Activated naive CD4-positive, alpha-beta T cell treated with anti-CD3 and anti-CD28 coated beads for 36 hours (primary cell): ENCODE measurements at regions of chr9 and their contacts with region 1.

Region 1: DNA sequence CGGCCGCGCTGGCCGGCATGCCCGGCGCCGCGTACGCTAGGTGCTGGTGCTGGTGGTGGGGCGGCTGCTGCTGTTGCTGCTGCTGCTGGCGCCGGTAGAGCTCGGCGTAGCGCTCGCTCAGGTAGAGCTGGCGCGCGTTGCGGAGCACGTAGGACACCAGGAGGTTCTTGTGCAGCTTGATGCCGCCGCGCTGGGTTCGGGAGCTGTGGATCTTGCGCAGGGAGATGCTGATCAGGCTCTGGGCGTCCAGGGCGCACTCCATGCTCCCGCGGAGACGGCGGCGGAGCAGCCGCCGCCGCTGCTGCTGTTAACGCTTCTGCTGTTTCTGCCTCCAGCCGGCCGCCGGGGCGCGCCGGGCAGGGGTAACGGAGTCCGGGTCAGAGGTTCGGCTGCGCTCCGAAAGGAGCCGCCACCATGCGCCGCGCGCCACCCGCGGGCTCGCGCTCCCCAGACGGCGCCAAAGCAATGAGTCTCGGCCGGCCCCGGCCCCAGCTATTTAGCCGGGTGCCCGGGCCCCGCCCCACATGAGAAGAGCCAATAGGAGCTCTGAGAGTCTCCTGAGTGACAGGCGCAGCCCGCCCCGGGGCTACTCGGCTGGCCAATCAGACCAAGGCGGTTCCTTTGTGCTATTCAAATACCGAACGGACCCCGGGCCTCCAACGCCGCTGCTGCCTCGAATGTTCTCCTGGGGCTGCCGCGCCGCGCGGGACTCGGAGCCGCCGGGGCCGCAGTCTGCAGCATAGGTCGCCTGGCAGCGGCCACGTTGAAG is at the start of gene IER5L:
- DNase-seq: peak; percentile 93
- H3K4me3 Mint-ChIP-seq: peak within 1 kb of the TSS; percentile 87
- H3K27ac Mint-ChIP-seq: no peak within 1 kb of the TSS
- H3K4me1 Mint-ChIP-seq: peaks cover 8% of the 10 kb centered on the region
- H3K27me3 Mint-ChIP-seq: no peaks in the 10 kb centered on the region
- total RNA-seq, gene IER5L: 1.1 to 1.6 TPM

Region 2: DNA sequence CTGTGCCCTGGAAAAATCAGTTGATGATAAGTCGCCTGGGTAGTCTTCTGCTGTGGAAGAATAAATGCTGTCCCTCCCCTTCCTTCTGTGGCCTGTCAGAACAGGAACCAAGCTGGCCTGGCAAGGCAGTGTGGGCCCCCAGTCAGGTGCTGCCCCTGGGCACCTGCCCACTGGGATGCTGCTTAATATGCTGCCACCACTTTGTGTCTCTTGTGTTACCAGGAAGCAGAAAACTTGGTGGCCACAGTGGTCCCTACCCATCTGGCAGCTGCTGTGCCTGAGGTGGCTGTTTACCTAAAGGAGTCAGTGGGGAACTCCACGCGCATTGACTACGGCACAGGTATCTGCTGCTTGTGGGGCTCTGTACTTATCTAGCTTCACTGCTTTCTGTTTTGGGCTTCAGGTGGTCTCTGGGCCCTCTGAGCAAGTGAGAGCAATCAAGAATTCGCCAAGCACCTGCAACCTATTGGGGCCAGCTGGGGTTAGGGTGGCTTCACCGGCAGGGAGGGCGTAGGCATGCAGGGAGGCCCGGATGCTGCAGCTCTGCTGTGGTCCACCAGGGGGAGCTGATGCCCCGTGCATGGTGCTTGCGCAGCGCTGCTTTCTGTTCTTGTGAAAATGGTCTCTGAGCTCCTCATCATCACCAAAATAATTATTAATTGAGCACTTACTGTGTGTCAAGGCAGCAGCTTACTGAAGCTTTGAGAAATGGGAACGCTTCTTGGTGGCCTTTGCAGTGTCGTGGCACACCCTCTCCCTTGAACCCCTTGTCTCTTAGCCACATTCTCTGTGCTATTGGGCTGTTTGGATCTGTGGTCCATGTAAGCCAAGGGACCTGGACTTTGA is 46.5 kb before region 1 on chr9:
- CTCF ChIA-PET with region 1: interaction called, 24 read pairs
- intact Hi-C with region 1: no loop called
- DNase-seq: peak; percentile 90
- H3K4me3 Mint-ChIP-seq: no peak overlapping the region
- H3K27ac Mint-ChIP-seq: peak overlapping the region; percentile 27
- H3K4me1 Mint-ChIP-seq: peaks cover 6% of the 10 kb centered on the region
- H3K27me3 Mint-ChIP-seq: no peaks in the 10 kb centered on the region

Region 3: DNA sequence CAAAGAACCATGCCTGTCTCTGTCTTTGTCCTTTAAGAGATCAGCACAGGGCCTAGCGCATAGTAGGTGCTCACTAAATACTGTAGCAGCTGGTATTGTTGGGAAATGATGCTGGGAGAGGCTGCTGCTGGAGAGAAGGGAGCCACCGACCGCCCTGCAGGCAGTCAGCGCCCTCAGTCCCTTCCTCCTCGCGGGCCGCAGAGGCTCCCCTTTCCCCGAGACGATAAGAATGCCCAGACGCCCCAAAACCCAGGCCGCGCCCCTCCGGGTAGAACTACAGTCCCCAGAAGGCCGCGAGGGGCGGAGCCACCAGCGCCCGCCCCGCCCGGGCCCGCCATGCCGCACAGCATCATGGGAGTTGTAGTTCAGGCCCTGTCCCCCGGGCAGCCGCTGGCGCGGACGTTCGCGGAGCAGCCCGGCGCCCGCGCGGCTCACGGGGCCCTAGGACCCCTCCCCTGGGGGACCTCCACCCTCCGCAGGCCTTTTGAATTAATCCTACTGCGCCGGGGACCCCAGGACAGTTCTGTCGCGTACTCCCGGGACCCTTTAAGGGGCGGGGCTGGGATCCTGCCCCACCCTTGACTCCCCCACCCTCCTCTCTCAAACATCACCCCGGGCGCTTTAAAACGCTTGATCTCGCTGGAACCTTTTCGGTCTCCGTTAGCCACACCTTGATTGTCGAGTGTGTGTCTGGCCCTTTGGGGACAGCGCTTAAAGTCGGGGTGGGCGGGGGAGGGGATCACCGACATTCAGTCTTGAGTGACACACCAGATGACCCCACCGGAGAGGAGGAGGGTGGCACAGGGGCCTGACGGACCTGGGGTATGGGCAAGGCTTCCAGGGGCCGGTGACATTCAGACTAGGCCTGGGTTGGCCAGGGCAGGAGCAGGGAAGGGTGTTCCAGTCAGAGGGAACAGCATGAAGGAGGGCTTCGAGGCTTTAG is 24.9 kb after region 1 on chr9:
- CTCF ChIA-PET with region 1: interaction called, 6 read pairs
- intact Hi-C with region 1: loop called (anchors 1 kb)
- DNase-seq: peak; percentile 89
- H3K4me3 Mint-ChIP-seq: peak overlapping the region; percentile 65
- H3K27ac Mint-ChIP-seq: no peak overlapping the region
- H3K4me1 Mint-ChIP-seq: peaks cover 18% of the 10 kb centered on the region
- H3K27me3 Mint-ChIP-seq: no peaks in the 10 kb centered on the region

Region 4: GRCh38 chr9:129258124-129258822 is 80.3 kb after region 1 on chr9:
- CTCF ChIA-PET with region 1: no interaction called
- intact Hi-C with region 1: no loop called
- DNase-seq: peak; percentile 90
- H3K4me3 Mint-ChIP-seq: peak overlapping the region; percentile 57
- H3K27ac Mint-ChIP-seq: no peak overlapping the region
- H3K4me1 Mint-ChIP-seq: peaks cover 28% of the 10 kb centered on the region
- H3K27me3 Mint-ChIP-seq: peaks cover 3% of the 10 kb centered on the region

Region 5: DNA sequence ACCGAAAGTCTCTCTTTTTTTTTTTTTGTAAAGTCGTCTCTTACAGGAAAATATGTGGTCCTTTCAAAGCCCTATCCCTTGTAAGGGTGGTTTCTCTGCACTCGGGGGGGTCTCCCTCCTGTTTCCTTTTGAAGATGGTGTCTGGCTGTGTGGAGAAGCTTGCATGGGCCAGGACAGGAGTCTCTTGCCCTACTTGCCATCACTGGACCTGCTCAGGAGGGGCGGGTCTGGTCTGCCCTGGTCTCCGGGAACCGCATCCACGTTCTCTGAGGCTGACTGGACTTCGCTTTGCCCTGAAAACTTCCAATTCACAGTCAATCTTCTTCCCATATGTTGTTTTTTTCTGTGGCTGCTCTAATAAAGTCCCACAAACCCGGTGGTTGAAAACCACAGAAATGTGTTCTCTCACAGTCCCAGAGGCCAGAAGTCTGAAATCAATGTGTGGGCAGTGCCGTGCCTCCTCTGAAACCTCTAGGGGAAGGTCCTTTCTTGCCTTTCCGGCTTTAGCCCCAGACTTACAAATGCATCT is 93.0 kb after region 1 on chr9:
- CTCF ChIA-PET with region 1: no interaction called
- intact Hi-C with region 1: loop called (anchors 2 kb)
- DNase-seq: peak; percentile 39
- H3K4me3 Mint-ChIP-seq: no peak overlapping the region
- H3K27ac Mint-ChIP-seq: no peak overlapping the region
- H3K4me1 Mint-ChIP-seq: peaks cover 22% of the 10 kb centered on the region
- H3K27me3 Mint-ChIP-seq: no peaks in the 10 kb centered on the region

Region 6: DNA sequence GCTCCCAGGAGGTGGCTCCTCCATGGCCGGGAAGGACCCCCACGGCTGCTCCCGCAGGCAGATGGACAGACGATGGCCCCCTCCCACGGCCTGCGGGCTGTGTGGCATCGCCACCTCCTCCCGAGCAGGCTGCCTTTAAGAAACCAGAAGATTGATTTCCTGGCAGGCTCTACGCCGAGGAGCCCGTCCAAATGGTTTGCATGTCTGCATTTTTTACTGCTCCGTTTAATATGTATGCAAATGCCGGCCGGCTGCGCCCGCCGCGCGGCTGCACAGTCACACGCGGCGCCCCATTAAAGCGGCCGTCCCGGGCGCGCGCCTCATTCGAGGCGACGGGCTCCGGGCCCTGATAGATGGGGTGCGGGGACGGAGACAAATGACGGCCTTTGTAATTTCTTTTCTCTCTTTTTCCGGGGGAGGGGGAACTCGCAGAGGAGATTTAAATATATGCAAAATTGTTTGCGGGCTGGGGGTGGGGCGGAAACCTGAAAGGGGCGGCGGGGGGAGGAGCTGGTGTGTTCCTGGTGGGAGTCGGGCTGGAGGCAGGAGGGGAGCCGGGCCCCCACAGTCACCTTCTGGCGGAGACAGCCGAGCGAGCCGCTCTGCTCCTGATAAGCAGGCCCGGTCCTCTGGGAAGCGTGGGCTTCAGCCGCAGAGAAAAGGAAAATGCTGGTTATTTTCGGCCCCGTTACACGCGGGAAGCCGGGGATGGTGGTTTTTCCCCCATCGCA is 158.8 kb after region 1 on chr9:
- CTCF ChIA-PET with region 1: interaction called, 5 read pairs
- intact Hi-C with region 1: loop called (anchors 5 kb)
- DNase-seq: peak; percentile 57
- H3K4me3 Mint-ChIP-seq: peak overlapping the region; percentile 64
- H3K27ac Mint-ChIP-seq: no peak overlapping the region
- H3K4me1 Mint-ChIP-seq: peaks cover 27% of the 10 kb centered on the region
- H3K27me3 Mint-ChIP-seq: no peaks in the 10 kb centered on the region

Region 7: GRCh38 chr9:129610473-129611301 is 432.7 kb after region 1 on chr9:
- CTCF ChIA-PET with region 1: interaction called, 9 read pairs
- intact Hi-C with region 1: loop called (anchors 1 kb)
- DNase-seq: peak; percentile 83
- H3K4me3 Mint-ChIP-seq: peak overlapping the region; percentile 71
- H3K27ac Mint-ChIP-seq: no peak overlapping the region
- H3K4me1 Mint-ChIP-seq: peaks cover 25% of the 10 kb centered on the region
- H3K27me3 Mint-ChIP-seq: no peaks in the 10 kb centered on the region

Region 8: DNA sequence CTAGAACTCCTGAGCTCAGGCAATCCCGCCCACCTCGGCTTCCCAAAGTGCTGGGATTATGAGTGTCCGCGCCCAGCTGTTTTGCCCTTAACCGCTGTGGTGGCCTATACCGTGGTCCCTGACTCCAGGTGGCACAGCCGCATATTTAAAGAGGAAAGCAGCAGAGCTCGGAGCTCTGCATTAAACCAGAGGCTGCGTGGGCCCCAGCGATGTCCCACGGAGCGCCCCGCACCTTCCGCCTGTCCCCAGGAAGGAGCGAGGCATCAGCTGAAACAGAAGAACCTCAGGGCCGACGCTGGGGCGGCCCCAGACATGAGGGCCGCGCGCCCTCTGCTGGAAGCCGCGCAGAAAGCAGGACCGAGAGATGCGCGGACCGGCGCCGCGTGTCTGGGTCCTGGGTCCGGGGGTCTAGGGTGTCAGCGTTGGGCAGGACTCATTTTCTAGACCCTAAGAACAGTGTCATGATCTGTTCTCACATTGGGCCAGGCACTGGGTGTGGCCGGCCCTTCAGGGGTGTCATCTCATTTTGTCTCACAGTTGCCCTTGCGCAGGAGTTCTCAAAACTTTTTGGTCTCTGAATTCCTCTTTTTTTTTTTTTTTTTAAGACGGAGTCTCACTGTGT is 1868.7 kb after region 1 on chr9:
- CTCF ChIA-PET with region 1: no interaction called
- intact Hi-C with region 1: no loop called
- DNase-seq: peak; percentile 78
- H3K4me3 Mint-ChIP-seq: peak overlapping the region; percentile 16
- H3K27ac Mint-ChIP-seq: no peak overlapping the region
- H3K4me1 Mint-ChIP-seq: peaks cover 8% of the 10 kb centered on the region
- H3K27me3 Mint-ChIP-seq: peaks cover 4% of the 10 kb centered on the region